Dorsolateral prefrontal cortex (tissue), 120 donors: ENCODE measurements at regions of chr11 and their contacts with region 1.

Region 1: GRCh38 chr11:45102810-45103621 is 43.4 kb upstream of the PRDM11 start:
- DNase-seq: peak in 4 of 10 donors; percentile 35 to 75 (median 63)
- H3K4me3 ChIP-seq: peak overlapping the region in 1 of 59 donors; percentile 16
- H3K27ac ChIP-seq: peak overlapping the region in 2 of 59 donors; percentile 15 to 28
- H3K27me3 ChIP-seq: peaks cover 0 to 12% (median 0%) of the 10 kb centered on the region in 45 donors
- CTCF ChIP-seq: peak; percentile 70 to 99 (median 95)

Region 2: GRCh38 chr11:44565211-44565952 is 537.6 kb before region 1 on chr11 and contains the start of gene CD82:
- intact Hi-C with region 1: loop called in 1 of 2 experiments (anchors 10 kb)
- DNase-seq: peak; percentile 93 to 100 (median 99)
- H3K4me3 ChIP-seq: peak within 1 kb of the TSS; percentile 47 to 93 (median 77)
- H3K27ac ChIP-seq: peak within 1 kb of the TSS; percentile 72 to 99 (median 93)
- H3K27me3 ChIP-seq: no peaks in the 10 kb centered on the region
- CTCF ChIP-seq: peak in 36 of 56 donors; percentile 3 to 56 (median 38)
- total RNA-seq, gene CD82: 22.6 to 179 (median 59.4) TPM

Region 3: DNA sequence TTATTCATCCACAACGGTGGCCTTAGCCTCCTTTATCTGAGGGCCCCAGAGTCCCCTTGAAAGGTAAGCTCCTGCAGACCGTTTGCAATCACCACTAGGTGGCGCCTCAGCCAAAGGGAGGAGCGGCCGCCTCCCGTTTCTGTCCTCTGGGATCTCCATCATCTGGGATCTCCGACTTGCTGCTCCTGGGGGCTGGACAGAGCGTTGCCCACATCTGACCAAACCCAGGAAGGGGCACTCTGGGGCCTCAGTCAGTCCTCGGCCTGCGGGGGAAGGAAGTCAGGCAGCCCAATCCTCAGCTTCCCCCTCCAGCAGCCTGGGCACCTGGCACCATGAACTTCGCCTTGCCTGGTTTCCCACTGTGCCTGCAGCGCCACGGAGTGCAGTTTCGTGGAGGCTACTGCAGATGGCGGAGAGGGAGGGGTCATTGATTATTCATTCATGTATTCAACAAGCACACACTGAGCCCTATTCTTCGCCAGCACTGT is 175.8 kb before region 1 on chr11:
- intact Hi-C with region 1: loop called in 1 of 2 experiments (anchors 2 kb)
- DNase-seq: peak; percentile 79 to 90 (median 88)
- H3K4me3 ChIP-seq: peak overlapping the region in 54 of 59 donors; percentile 13 to 64 (median 42)
- H3K27ac ChIP-seq: peak overlapping the region in 57 of 59 donors; percentile 3 to 92 (median 76)
- H3K27me3 ChIP-seq: no peaks in the 10 kb centered on the region
- CTCF ChIP-seq: peak; percentile 76 to 99 (median 94)

Region 4: GRCh38 chr11:44936525-44936924 is 166.5 kb before region 1 on chr11:
- intact Hi-C with region 1: loop called (anchors 1 kb)
- DNase-seq: peak; percentile 74 to 94 (median 88)
- H3K4me3 ChIP-seq: peak overlapping the region in 31 of 59 donors; percentile 3 to 56 (median 32)
- H3K27ac ChIP-seq: peak overlapping the region in 5 of 59 donors; percentile 8 to 60 (median 25)
- H3K27me3 ChIP-seq: no peaks in the 10 kb centered on the region
- CTCF ChIP-seq: peak; percentile 84 to 100 (median 98)

Region 5: DNA sequence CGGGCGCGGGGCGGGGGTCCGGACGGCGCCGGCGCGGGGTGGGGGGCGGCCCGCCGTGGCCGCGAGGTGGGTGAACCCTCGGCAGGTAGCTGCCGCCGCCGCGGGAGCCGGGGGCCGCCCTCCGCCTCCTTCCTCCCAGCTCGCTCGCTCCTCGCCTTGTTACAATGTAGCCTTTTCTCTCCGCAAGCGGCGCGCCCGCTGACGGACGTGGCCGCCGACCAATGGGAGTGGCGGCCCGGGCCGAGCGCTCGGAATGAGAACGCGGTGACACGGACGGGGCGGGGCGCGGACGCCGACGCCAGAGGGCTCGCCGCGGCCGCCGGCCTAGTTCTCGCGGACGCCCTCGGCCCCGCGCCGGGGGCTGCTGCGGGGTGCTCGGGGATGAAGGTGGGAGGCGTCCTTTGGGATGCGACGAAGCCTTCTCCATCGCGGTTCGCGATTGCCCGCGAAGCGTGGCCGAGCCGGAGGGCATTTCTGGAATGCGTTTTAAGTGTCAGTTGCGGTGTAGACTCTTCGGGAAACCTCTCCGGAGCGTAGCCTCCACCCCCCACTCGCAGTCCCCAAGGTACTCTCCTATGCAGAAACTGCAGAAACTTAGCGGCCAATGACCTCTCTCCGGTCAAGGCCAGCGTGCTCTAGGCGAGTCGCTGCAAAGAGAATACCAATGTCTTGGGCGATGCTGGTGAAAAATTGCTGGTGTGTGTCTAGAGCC is 44.2 kb after region 1 on chr11:
- intact Hi-C with region 1: loop called (anchors 5 kb)
- DNase-seq: peak; percentile 85 to 97 (median 94)
- H3K4me3 ChIP-seq: peak overlapping the region; percentile 61 to 97 (median 83)
- H3K27ac ChIP-seq: peak overlapping the region in 57 of 59 donors; percentile 2 to 98 (median 92)
- H3K27me3 ChIP-seq: no peaks in the 10 kb centered on the region
- CTCF ChIP-seq: peak in 41 of 56 donors; percentile 4 to 57 (median 32)

Region 6: DNA sequence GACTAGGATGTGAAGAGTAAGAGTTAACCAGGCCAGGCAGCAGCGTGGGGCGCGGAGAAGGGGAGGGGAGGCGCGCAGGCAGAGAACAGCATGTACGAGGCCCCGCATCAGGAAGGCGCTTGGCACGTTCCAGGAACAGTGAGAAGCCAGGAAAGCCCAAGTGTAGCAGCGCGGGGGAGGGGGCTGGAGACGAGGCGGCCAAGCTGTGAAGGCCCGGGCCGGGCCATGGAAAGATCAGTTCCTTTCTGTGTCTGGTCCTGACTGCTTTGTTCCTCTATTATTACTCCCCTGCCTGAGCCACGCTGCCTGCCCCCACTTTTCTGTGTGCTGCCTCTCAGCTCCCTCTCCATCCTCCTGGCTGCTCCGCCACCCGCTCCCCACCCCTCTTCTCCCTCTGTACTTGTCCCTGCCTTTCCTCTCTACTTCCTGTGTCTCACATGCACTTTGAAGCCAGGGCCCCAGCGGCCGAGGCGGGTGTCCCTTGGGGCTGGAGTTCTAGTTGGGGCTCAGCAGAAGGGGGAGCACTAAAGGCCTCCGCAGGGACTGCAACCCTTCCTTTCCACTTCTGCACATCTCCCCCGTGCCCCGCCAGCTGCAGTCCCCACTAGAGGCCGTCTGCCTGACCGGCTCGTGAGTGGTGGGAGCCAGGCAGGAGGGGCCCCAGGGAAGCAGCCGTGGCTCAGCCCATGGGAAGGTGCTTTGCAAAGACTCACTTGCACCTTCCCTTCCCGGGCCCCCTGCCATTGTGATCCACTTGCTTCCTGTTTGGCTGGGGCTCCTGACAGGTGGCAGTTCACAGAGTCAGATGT is 107.1 kb after region 1 on chr11:
- intact Hi-C with region 1: no loop called
- DNase-seq: peak; percentile 59 to 89 (median 83)
- H3K4me3 ChIP-seq: peak overlapping the region in 39 of 59 donors; percentile 2 to 41 (median 20)
- H3K27ac ChIP-seq: peak overlapping the region in 58 of 59 donors; percentile 51 to 96 (median 84)
- H3K27me3 ChIP-seq: no peaks in the 10 kb centered on the region
- CTCF ChIP-seq: peak in 4 of 56 donors; percentile 12 to 27 (median 16)

Region 7: DNA sequence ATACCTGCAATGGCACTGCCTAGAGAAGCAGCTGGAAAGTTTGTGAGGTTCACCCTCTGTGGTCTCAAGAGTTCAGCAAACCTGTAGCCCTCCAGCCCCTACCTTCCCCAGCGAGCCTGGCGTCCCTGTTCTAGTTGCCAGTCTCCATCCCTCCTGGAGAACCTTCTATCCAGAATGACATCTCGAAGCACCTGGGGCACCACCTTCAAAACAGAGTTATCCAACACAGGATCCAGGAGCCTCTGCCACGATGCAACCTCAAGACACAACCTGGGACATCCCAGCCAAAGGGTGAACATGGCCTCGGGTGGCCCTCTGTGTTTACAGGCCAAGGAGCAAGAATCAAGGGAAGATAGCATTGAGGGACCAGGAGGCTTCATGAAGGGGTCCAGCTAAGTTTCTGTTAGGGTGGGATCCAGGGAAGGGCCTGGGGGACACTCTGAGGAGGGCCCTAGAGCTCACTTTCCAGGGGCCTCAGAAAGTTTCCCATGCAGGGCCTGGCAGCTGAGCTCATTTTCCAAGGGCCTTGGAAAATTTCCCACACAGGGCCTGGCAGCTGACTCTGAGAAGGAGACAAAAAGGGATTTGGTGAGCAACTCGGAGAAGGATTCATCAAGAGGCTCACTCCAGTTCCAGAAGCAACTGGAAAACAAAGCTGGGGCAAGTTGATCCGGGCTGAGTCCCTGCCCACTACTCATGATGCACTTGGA is 220.0 kb after region 1 on chr11:
- intact Hi-C with region 1: no loop called
- DNase-seq: no peak
- H3K4me3 ChIP-seq: no peak overlapping the region
- H3K27ac ChIP-seq: no peak overlapping the region
- H3K27me3 ChIP-seq: peaks cover 0 to 11% (median 0%) of the 10 kb centered on the region in 45 donors
- CTCF ChIP-seq: no peak